ENCODE measurements at regions of chr7 and their contacts with region 1.

Region 1: GRCh38 chr7:29748286-29749108 is 57.8 kb upstream of the WIPF3 start:
- DNase-seq: peak in 3 of 4 donors; percentile 13 to 38 (median 20)
- ATAC-seq: peak; percentile 85
- H3K4me3 ChIP-seq: no peak overlapping the region
- H3K27ac ChIP-seq: no peak overlapping the region
- H3K4me1 ChIP-seq: no peaks in the 10 kb centered on the region
- H3K27me3 ChIP-seq: no peaks in the 10 kb centered on the region
- CTCF ChIP-seq: peak in 6 of 7 experiments; percentile 49 to 65 (median 54)
- POLR2A ChIP-seq: no peak

Region 2: GRCh38 chr7:29825775-29826529 is 77.5 kb after region 1 on chr7:
- intact Hi-C with region 1: no loop called
- DNase-seq: no peak
- ATAC-seq: no peak
- H3K4me3 ChIP-seq: no peak overlapping the region
- H3K27ac ChIP-seq: no peak overlapping the region
- H3K4me1 ChIP-seq: no peaks in the 10 kb centered on the region
- H3K27me3 ChIP-seq: no peaks in the 10 kb centered on the region
- CTCF ChIP-seq: no peak
- POLR2A ChIP-seq: no peak

Region 3: DNA sequence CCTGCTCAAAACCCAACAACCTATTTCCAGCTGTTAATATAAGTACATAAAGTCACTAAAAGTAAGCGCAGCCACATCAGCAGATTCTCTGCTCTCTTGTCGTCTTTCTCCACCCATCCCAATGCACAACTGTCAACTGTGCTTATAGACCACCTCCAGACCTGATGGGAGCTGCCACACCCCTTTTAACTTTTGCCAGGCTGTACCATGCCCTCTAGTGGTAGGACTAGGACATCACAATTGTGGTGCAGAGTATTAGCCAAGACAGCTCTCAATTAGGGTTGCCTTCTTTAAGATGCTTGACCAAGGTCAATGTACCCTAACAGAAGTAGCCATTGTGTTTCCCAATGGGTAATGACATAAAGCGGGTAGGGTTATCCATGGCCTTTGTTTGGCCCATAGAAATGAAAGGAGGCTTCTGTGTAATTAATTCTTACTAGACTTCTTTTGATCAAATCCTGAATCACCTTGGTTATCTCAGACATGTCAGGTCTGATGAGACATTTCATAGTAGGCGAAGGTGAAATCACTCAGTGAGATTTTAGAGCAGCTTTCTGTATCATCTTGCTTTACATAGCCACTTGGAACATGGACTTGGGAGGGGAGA is 173.0 kb after region 1 on chr7:
- intact Hi-C with region 1: loop called (anchors 5 kb)
- DNase-seq: peak; percentile 34 to 51 (median 43)
- ATAC-seq: peak; percentile 75
- H3K4me3 ChIP-seq: no peak overlapping the region
- H3K27ac ChIP-seq: no peak overlapping the region
- H3K4me1 ChIP-seq: no peaks in the 10 kb centered on the region
- H3K27me3 ChIP-seq: no peaks in the 10 kb centered on the region
- CTCF ChIP-seq: peak; percentile 74 to 94 (median 83)
- POLR2A ChIP-seq: no peak

Measured in body of pancreas (tissue), 4 donors.